ENCODE measurements at regions of chr14 and their contacts with region 1.

Region 1: GRCh38 chr14:89915114-89915878 is 39.2 kb downstream of the EFCAB11 start:
- DNase-seq: peak in 6 of 10 donors; percentile 35 to 80 (median 64)
- H3K4me3 ChIP-seq: peak overlapping the region in 8 of 59 donors; percentile 10 to 33 (median 17)
- H3K27ac ChIP-seq: peak overlapping the region in 13 of 59 donors; percentile 2 to 54 (median 24)
- H3K27me3 ChIP-seq: no peaks in the 10 kb centered on the region
- CTCF ChIP-seq: peak; percentile 94 to 99 (median 97)

Region 2: DNA sequence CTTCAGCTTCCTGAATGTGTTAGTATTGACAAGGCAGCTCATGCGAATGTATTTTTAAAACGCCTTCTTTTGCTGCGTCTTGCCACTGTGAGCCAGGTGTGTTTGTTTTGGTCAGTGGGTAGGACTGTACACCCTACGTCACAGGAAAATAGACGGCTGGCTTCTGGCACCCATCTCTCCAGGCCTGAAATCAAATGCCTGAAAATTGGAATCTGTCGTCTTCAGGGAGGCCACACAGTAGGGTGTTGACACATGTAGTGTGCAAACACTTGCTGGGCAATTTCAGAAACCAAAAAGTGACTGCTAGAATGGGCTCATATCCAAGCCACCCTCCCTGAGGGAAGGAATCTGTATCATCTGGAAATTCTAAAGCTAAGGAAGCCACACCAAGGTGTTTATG is 881.5 kb before region 1 on chr14:
- intact Hi-C with region 1: loop called (anchors 5 kb)
- DNase-seq: no peak
- H3K4me3 ChIP-seq: no peak overlapping the region
- H3K27ac ChIP-seq: no peak overlapping the region
- H3K27me3 ChIP-seq: peaks cover 0 to 2% (median 0%) of the 10 kb centered on the region in 45 donors
- CTCF ChIP-seq: no peak

Region 3: GRCh38 chr14:89178802-89179535 is 736.3 kb before region 1 on chr14:
- intact Hi-C with region 1: loop called (anchors 5 to 10 kb)
- DNase-seq: no peak
- H3K4me3 ChIP-seq: no peak overlapping the region
- H3K27ac ChIP-seq: peak overlapping the region in 1 of 59 donors; percentile 96
- H3K27me3 ChIP-seq: no peaks in the 10 kb centered on the region
- CTCF ChIP-seq: no peak

Region 4: GRCh38 chr14:89252887-89253547 is 662.3 kb before region 1 on chr14:
- intact Hi-C with region 1: no loop called
- DNase-seq: peak in 1 of 10 donors; percentile 35
- H3K4me3 ChIP-seq: no peak overlapping the region
- H3K27ac ChIP-seq: peak overlapping the region in 2 of 59 donors; percentile 17 to 81
- H3K27me3 ChIP-seq: no peaks in the 10 kb centered on the region
- CTCF ChIP-seq: peak in 22 of 56 donors; percentile 7 to 43 (median 24)

Region 5: GRCh38 chr14:89422181-89422951 is 492.9 kb before region 1 on chr14:
- intact Hi-C with region 1: loop called (anchors 5 to 10 kb)
- DNase-seq: no peak
- H3K4me3 ChIP-seq: no peak overlapping the region
- H3K27ac ChIP-seq: peak overlapping the region in 3 of 59 donors; percentile 17 to 35 (median 25)
- H3K27me3 ChIP-seq: no peaks in the 10 kb centered on the region
- CTCF ChIP-seq: no peak

Region 6: GRCh38 chr14:89701211-89702043 is 213.9 kb before region 1 on chr14:
- intact Hi-C with region 1: loop called in 1 of 2 experiments (anchors 10 kb)
- DNase-seq: peak; percentile 51 to 84 (median 70)
- H3K4me3 ChIP-seq: peak overlapping the region; percentile 51 to 86 (median 74)
- H3K27ac ChIP-seq: peak overlapping the region in 39 of 59 donors; percentile 1 to 76 (median 49)
- H3K27me3 ChIP-seq: no peaks in the 10 kb centered on the region
- CTCF ChIP-seq: peak in 1 of 56 donors; percentile 1

Region 7: DNA sequence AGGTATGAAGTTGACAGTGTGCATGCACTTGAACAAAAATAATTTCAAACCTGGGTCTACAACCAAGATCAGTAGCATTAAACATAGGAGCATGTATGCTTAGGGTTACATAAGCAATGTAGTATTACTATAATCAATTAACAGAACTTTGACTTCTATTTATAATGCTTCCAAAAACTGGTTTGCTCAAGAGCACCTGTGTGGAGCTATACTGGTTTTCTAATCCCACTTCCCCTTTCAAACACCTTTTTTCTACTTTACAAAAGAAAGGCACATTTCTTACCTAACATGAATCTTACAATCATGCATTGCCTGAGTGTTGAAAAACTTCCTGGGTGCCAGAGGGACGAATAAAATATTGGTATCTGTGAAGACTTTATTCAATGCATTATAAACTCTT is 33.5 kb before region 1 on chr14:
- intact Hi-C with region 1: no loop called
- DNase-seq: no peak
- H3K4me3 ChIP-seq: no peak overlapping the region
- H3K27ac ChIP-seq: no peak overlapping the region
- H3K27me3 ChIP-seq: no peaks in the 10 kb centered on the region
- CTCF ChIP-seq: no peak

Measured in dorsolateral prefrontal cortex (tissue), 120 donors.